GM12878 (cell line): ENCODE measurements at regions of chr2 and their contacts with region 1.

Region 1: GRCh38 chr2:102122110-102122509 is 20.4 kb upstream of the IL1R1 start:
- DNase-seq: no peak
- ATAC-seq: no peak
- H3K4me3 ChIP-seq: no peak overlapping the region
- H3K27ac ChIP-seq: no peak overlapping the region
- H3K4me1 ChIP-seq: no peaks in the 10 kb centered on the region
- H3K27me3 ChIP-seq: no peaks in the 10 kb centered on the region
- CTCF ChIP-seq: no peak
- EP300 ChIP-seq: no peak
- POLR2A ChIP-seq: no peak
- RAD21 ChIP-seq: no peak

Region 2: GRCh38 chr2:101679037-101679726 is 442.9 kb before region 1 on chr2:
- CTCF ChIA-PET with region 1: no interaction called
- POLR2A ChIA-PET with region 1: no interaction called
- RAD21 ChIA-PET with region 1: no interaction called
- SMC1A ChIA-PET with region 1: no interaction called
- in situ Hi-C with region 1: no loop called
- intact Hi-C with region 1: no loop called
- DNase-seq: no peak
- ATAC-seq: no peak
- H3K4me3 ChIP-seq: no peak overlapping the region
- H3K27ac ChIP-seq: no peak overlapping the region
- H3K4me1 ChIP-seq: no peaks in the 10 kb centered on the region
- H3K27me3 ChIP-seq: no peaks in the 10 kb centered on the region; a peak in 1 of 4 replicates
- CTCF ChIP-seq: no peak
- EP300 ChIP-seq: no peak
- POLR2A ChIP-seq: no peak
- RAD21 ChIP-seq: no peak

Region 3: GRCh38 chr2:102141011-102141943 is 19.2 kb after region 1 on chr2:
- CTCF ChIA-PET with region 1: interaction called, 10 read pairs
- POLR2A ChIA-PET with region 1: interaction called, 3 read pairs
- RAD21 ChIA-PET with region 1: interaction called, 7 read pairs
- SMC1A ChIA-PET with region 1: interaction called, 7 read pairs
- in situ Hi-C with region 1: no loop called
- intact Hi-C with region 1: no loop called
- DNase-seq: no peak
- ATAC-seq: no peak
- H3K4me3 ChIP-seq: no peak overlapping the region
- H3K27ac ChIP-seq: no peak overlapping the region
- H3K4me1 ChIP-seq: no peaks in the 10 kb centered on the region
- H3K27me3 ChIP-seq: no peaks in the 10 kb centered on the region
- CTCF ChIP-seq: no peak
- EP300 ChIP-seq: no peak
- POLR2A ChIP-seq: no peak
- RAD21 ChIP-seq: no peak